Activated CD8-positive, alpha-beta T cell treated with anti-CD3 and anti-CD28 coated beads for 36 hours (primary cell): ENCODE measurements at regions of chr5 and their contacts with region 1.

Region 1: GRCh38 chr5:91383027-91383955 is at the start of gene ARRDC3:
- DNase-seq: peak; percentile 96
- ATAC-seq: peak; percentile 63
- H3K4me3 Mint-ChIP-seq: peak within 1 kb of the TSS; percentile 93
- H3K27ac Mint-ChIP-seq: peak within 1 kb of the TSS; percentile 98
- H3K4me1 Mint-ChIP-seq: peaks cover 14% of the 10 kb centered on the region
- H3K27me3 Mint-ChIP-seq: no peaks in the 10 kb centered on the region
- CTCF ChIP-seq: no peak
- total RNA-seq, gene ARRDC3: 35.4 to 39.2 TPM

Region 2: GRCh38 chr5:90932052-90932699 is 451.1 kb before region 1 on chr5:
- CTCF ChIA-PET with region 1: interaction called, 70 read pairs
- POLR2A ChIA-PET with region 1: no interaction called
- intact Hi-C with region 1: loop called (anchors 5 kb)
- DNase-seq: peak; percentile 33
- ATAC-seq: peak; percentile 42
- H3K4me3 Mint-ChIP-seq: no peak overlapping the region
- H3K27ac Mint-ChIP-seq: no peak overlapping the region
- H3K4me1 Mint-ChIP-seq: peaks cover 2% of the 10 kb centered on the region
- H3K27me3 Mint-ChIP-seq: peaks cover 4% of the 10 kb centered on the region
- CTCF ChIP-seq: peak; percentile 89

Region 3: GRCh38 chr5:91183737-91184136 is 199.6 kb before region 1 on chr5:
- CTCF ChIA-PET with region 1: interaction called, 17 read pairs
- POLR2A ChIA-PET with region 1: no interaction called
- intact Hi-C with region 1: no loop called
- DNase-seq: no peak
- ATAC-seq: no peak
- H3K4me3 Mint-ChIP-seq: no peak overlapping the region
- H3K27ac Mint-ChIP-seq: peak overlapping the region; percentile 13
- H3K4me1 Mint-ChIP-seq: peaks cover 10% of the 10 kb centered on the region
- H3K27me3 Mint-ChIP-seq: peaks cover 11% of the 10 kb centered on the region
- CTCF ChIP-seq: no peak

Region 4: GRCh38 chr5:91225848-91226686 is 157.2 kb before region 1 on chr5:
- CTCF ChIA-PET with region 1: interaction called, 149 read pairs
- POLR2A ChIA-PET with region 1: no interaction called
- intact Hi-C with region 1: loop called (anchors 1 kb)
- DNase-seq: peak; percentile 82
- ATAC-seq: peak; percentile 65
- H3K4me3 Mint-ChIP-seq: no peak overlapping the region
- H3K27ac Mint-ChIP-seq: no peak overlapping the region
- H3K4me1 Mint-ChIP-seq: no peaks in the 10 kb centered on the region
- H3K27me3 Mint-ChIP-seq: peaks cover 4% of the 10 kb centered on the region
- CTCF ChIP-seq: peak; percentile 73

Region 5: GRCh38 chr5:91266184-91266705 is 117.0 kb before region 1 on chr5:
- CTCF ChIA-PET with region 1: interaction called, 19 read pairs
- POLR2A ChIA-PET with region 1: interaction called, 4 read pairs
- intact Hi-C with region 1: no loop called
- DNase-seq: no peak
- ATAC-seq: peak; percentile 87
- H3K4me3 Mint-ChIP-seq: no peak overlapping the region
- H3K27ac Mint-ChIP-seq: no peak overlapping the region
- H3K4me1 Mint-ChIP-seq: peaks cover 22% of the 10 kb centered on the region
- H3K27me3 Mint-ChIP-seq: no peaks in the 10 kb centered on the region
- CTCF ChIP-seq: peak; percentile 55

Region 6: DNA sequence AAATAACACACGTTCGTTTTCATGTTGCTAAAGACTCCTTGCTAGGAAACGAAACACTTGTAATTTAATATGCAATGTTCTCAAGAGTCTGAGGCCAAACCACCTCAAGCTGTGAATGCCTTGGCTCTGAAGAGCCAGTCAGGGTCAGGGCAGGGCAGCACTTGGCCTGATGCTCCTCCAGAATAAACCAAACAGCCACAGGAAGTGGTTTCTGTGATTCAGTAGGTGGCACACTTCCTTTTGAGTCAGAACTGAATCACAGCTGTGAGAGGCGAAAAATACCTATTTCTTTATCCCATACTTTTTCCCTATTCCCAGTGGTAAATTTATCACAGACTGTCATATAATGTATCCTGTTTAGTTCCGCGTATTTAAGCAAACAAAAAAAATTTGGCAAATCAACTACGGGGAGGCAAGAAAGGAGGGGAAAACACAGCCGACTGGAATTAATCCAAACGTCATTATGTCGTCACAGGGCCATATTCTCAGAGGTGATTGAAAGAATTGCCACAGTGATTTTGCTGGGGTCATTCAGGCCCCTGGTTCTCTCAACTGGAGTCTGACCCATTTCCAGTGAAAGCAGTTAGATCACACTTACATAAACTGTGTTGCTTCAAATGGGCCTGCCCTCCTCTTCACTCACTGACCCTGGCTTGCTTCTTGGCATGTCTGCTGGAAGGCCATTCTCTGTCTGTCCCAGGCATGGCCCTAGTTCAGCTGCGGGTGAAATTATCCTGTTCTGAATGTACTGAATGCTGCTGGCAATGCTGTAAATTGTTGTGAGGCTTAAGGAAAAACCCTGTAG is 71.4 kb before region 1 on chr5:
- CTCF ChIA-PET with region 1: interaction called, 8 read pairs
- POLR2A ChIA-PET with region 1: interaction called, 11 read pairs
- intact Hi-C with region 1: loop called (anchors 2 kb)
- DNase-seq: peak; percentile 87
- ATAC-seq: peak; percentile 79
- H3K4me3 Mint-ChIP-seq: peak overlapping the region; percentile 75
- H3K27ac Mint-ChIP-seq: peak overlapping the region; percentile 90
- H3K4me1 Mint-ChIP-seq: peaks cover 45% of the 10 kb centered on the region
- H3K27me3 Mint-ChIP-seq: no peaks in the 10 kb centered on the region
- CTCF ChIP-seq: no peak

Region 7: DNA sequence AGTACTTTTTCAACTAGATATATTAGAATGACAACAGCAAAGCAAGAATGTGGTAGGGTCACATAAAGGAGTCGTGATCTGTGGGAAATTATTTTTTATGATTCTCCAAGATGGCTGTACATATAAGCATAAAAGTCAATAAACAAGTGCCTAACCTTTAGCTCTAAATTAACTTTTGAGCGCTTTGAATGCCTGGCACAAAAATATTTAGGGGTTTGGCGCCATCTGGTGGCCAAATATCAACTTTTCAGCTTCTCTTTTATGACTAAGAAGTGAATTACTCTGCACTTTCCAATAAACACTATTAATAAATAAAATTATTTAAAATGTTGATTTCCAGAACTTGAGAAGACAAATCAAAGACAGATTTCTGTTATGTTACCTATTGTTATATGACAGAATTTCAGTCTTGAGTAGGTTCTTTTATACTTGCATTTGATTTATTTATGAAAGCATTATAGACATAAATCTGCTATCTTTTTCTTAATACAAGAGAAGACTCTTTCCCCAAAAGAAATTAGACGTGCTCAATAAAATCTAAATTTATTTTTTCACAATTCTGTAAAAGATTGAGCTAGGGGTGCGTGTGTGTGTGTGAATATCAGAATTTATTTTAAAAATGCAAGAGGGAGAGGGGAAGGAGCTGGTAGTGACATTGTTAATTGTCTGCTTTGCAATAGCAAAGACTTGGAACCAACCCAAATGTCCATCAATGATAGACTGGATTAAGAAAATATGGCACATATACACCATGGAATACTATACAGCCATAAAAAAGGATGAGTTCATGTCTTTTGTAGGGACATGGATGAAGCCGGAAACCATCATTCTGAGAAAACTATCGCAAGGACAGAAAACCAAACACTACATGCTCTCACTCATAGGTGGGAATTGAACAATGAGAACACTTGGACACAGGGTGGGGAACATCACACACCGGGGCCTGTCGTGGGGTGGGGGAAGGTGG is 36.6 kb after region 1 on chr5:
- CTCF ChIA-PET with region 1: interaction called, 124 read pairs
- POLR2A ChIA-PET with region 1: no interaction called
- intact Hi-C with region 1: loop called (anchors 2 kb)
- DNase-seq: peak; percentile 84
- ATAC-seq: peak; percentile 24
- H3K4me3 Mint-ChIP-seq: no peak overlapping the region
- H3K27ac Mint-ChIP-seq: no peak overlapping the region
- H3K4me1 Mint-ChIP-seq: peaks cover 18% of the 10 kb centered on the region
- H3K27me3 Mint-ChIP-seq: no peaks in the 10 kb centered on the region
- CTCF ChIP-seq: peak; percentile 89

Region 8: DNA sequence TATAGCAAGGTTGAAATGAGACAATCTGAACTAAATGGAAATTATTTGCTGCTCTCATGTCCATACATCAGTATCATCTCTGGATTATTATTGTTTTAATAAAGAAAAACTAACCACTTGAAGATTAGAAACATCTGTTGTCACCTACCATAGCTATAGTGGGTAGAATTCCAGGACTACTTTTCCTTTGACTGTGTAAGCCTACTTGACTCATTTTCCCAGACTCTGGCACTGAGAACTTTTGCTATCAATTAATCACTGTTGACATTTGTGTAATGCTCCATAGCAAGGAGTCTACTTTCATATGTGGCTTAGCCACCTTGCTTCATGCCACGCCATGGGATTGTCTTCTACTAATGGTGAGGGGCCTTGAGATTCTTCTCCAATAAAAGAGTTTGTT is 59.7 kb after region 1 on chr5:
- CTCF ChIA-PET with region 1: no interaction called
- POLR2A ChIA-PET with region 1: no interaction called
- intact Hi-C with region 1: no loop called
- DNase-seq: no peak
- ATAC-seq: no peak
- H3K4me3 Mint-ChIP-seq: no peak overlapping the region
- H3K27ac Mint-ChIP-seq: no peak overlapping the region
- H3K4me1 Mint-ChIP-seq: peaks cover 4% of the 10 kb centered on the region
- H3K27me3 Mint-ChIP-seq: no peaks in the 10 kb centered on the region
- CTCF ChIP-seq: no peak